ENCODE measurements at regions of chr4 and their contacts with region 1.

Region 1: GRCh38 chr4:107757864-107758476 is 37.9 kb upstream of the PAPSS1 start:
- DNase-seq: no peak
- H3K4me3 ChIP-seq: no peak overlapping the region
- CTCF ChIP-seq: no peak

Region 2: DNA sequence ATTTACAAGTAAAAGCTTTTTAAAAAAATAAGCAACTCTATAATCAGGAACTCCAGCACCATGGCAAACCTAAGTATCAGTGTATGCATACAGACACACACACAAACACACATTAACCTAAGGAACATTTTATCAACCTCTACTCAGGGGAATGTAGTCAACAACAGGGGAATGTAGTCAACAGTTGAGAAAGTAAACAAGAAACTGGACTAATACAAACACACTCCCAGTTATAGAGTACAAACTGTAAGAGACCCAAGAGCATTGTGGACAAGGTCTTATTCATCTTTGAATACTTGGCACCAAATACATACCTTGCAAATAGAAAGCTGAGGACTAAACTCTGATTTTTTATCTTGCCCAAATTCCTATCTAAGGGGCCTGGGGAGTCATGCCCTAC is 74.1 kb before region 1 on chr4:
- CTCF ChIA-PET with region 1: no interaction called
- POLR2A ChIA-PET with region 1: no interaction called
- DNase-seq: no peak
- H3K4me3 ChIP-seq: no peak overlapping the region
- CTCF ChIP-seq: no peak

Region 3: DNA sequence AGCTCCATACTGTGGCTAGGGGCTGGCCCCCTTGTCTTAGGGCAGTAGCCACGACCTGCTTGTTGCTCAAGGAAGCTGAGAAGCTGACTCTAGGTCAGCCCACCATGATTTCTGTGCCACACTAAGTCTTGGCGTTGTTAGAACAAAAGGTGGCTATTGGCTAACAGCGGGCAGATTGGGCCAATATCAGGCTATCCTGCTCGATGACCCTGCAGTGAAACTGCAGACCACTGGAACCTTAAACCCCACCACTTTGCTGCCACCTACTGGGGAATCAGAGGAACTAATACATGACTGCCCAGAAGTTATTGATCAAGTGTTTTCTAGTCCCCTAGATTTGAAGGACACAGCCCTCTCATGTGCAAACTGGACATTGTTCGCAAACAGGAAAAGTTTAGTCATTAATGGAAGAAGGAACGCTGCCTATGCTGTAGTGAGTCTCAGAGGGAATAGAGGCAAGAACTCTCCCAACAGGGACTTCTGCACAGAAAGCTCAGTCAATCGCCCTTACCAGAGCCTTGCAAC is 21.0 kb before region 1 on chr4:
- CTCF ChIA-PET with region 1: interaction called, 10 read pairs
- POLR2A ChIA-PET with region 1: no interaction called
- DNase-seq: no peak
- H3K4me3 ChIP-seq: no peak overlapping the region
- CTCF ChIP-seq: peak; percentile 74

Region 4: DNA sequence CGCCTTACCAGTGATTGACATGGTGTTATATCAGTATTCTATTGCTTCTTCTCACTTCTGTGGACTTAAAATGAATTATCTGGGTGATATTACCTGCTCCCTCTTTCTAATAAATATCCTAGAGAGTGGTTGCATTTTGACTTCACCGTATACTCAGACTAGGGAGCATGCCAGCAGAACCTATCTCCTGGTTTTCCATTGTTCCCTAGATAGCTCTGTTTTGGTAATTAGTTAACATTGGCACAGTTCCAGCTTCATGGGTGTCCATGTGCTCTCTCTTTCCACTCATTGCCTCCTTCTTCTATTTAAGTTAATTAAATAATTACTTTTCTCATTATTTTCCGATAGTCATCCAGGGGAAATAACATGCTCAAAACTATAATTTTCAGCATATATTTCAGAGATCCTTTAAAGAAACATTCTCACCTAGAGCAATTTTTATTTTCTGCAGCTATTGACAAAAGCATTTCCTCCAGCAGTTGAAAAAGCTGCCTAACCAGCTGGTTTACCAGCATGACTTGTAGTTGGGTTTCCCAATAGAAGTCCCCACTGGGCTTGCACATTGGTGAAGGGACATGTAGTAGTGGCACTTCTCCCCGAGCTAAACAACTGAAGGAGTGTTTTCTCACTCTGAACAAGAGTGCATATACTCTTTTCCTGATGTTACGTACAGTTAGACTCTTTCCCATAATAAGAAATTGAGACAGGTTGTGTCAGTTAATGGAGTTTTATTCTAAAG is 10.1 kb before region 1 on chr4:
- CTCF ChIA-PET with region 1: interaction called, 38 read pairs
- POLR2A ChIA-PET with region 1: no interaction called
- DNase-seq: no peak
- H3K4me3 ChIP-seq: no peak overlapping the region
- CTCF ChIP-seq: no peak

Region 5: DNA sequence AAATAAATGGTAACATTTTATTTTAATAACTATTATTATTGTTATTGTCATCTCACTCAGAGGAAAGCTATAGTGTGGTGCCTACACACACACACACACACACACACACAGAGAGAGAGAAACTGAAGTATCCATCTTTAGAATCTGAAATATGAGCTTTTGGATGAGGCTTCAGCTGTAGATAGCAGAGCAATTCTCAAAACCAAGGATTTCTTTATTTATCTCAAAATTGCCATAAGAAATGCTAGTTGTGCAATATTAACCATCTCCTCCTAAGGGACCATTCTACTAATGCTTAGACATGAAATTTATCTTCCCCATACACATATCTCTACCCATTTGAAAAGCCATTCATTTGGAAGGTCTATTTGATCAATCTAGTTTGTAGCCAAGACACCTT is 16.7 kb after region 1 on chr4:
- CTCF ChIA-PET with region 1: interaction called, 53 read pairs
- POLR2A ChIA-PET with region 1: no interaction called
- DNase-seq: no peak
- H3K4me3 ChIP-seq: no peak overlapping the region
- CTCF ChIP-seq: no peak

Region 6: DNA sequence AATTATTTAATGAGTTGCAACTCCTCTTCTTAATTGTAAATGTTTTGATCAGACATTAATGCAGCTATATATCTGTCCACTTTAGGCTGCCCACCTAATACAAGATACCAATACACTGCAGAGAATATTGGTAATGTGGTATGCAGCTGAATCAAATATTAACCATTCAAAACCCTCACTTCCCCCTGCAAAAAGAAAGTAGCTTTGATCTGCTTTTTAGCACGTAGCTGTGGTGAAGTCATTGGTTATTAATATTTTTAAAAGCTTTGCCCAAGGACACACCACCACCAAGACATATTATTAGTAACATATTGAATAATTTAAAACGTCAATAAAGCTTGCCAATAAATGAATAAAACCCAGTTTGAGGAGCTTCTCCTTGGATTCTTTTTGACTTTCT is 144.7 kb after region 1 on chr4:
- CTCF ChIA-PET with region 1: interaction called, 28 read pairs
- POLR2A ChIA-PET with region 1: no interaction called
- DNase-seq: no peak
- H3K4me3 ChIP-seq: no peak overlapping the region
- CTCF ChIP-seq: no peak

Region 7: GRCh38 chr4:107913281-107913899 is 155.4 kb after region 1 on chr4:
- CTCF ChIA-PET with region 1: interaction called, 139 read pairs
- POLR2A ChIA-PET with region 1: no interaction called
- DNase-seq: no peak
- H3K4me3 ChIP-seq: no peak overlapping the region
- CTCF ChIP-seq: peak; percentile 62

Region 8: GRCh38 chr4:107930821-107931774 is 173.1 kb after region 1 on chr4 and contains the start of gene CYP2U1:
- CTCF ChIA-PET with region 1: interaction called, 12 read pairs
- POLR2A ChIA-PET with region 1: no interaction called
- DNase-seq: no peak
- H3K4me3 ChIP-seq: peak within 1 kb of the TSS; percentile 77
- CTCF ChIP-seq: no peak